ENCODE measurements at regions of chr6 and their contacts with region 1.

Region 1: GRCh38 chr6:149028767-149029405 is 282.1 kb downstream of the UST start:
- DNase-seq: peak; percentile 67
- H3K4me3 Mint-ChIP-seq: peak overlapping the region; percentile 77
- H3K27ac Mint-ChIP-seq: peak overlapping the region; percentile 87
- H3K4me1 Mint-ChIP-seq: peaks cover 57% of the 10 kb centered on the region
- H3K27me3 Mint-ChIP-seq: no peaks in the 10 kb centered on the region

Region 2: GRCh38 chr6:148760568-148761526 is 268.0 kb before region 1 on chr6:
- intact Hi-C with region 1: loop called (anchors 2 kb)
- DNase-seq: no peak
- H3K4me3 Mint-ChIP-seq: peak overlapping the region; percentile 11
- H3K27ac Mint-ChIP-seq: peak overlapping the region; percentile 54
- H3K4me1 Mint-ChIP-seq: peaks cover 30% of the 10 kb centered on the region
- H3K27me3 Mint-ChIP-seq: peaks cover 57% of the 10 kb centered on the region

Region 3: DNA sequence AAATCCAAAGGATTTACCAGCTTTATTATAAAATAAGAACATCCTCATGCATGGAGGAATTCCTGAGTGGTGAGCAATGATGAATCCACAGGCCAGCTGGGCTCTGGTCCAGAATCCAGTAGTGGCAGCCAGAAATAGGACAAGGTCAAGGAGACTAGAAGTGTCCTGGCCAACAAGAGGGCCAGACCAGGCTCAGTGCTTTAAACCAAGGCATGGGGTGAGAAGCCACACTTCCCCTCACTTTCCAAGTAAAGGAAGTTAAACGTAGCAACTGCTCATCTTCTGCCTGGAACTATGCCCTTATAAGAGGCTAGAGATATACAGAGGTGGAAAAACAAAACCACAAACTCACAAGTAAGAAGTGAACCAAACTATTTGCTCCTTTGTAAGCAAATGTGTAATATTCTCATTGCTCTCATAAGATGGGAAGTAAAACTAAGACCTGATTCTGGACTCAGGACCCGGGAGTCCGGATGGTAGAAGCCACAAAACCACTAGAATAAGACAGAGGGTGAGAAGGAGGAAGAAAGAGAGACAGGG is 28.9 kb before region 1 on chr6:
- intact Hi-C with region 1: no loop called
- DNase-seq: no peak
- H3K4me3 Mint-ChIP-seq: peak overlapping the region; percentile 47
- H3K27ac Mint-ChIP-seq: peak overlapping the region; percentile 33
- H3K4me1 Mint-ChIP-seq: peaks cover 33% of the 10 kb centered on the region
- H3K27me3 Mint-ChIP-seq: peaks cover 17% of the 10 kb centered on the region

Region 4: DNA sequence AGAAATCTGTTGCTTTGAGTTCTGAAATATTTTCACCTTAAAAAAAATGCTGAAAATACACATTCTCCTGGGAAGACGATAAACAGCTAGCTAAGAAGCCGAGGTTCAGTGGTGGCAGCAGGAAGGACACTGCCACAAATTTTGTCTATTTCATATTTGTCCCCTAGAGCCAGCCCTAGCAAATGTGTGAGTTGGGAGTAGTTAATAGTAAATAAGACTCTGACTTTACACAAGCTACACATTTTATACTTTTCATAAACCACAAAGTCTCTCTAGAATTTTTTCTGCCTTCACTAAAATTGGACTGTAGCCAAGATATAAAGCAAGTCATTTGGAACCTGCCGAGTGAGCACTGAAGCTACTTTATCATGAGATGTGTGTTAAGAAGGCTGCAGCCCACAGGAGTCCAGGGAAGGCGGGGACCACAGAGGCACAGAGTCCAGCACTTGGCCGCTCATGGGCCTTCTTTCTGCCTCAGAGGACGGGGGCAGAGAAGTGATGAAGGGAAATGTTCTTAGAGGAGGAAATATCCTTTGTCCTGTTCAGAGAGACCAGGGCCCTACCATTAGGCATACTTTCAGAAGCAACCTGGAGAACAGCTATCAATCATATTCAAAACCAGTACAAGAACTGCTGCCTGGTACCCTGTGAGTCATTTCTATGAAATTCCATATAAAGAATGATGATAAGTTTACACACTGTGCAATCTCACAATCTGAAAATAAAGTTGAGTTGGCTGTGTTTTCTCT is 46.9 kb after region 1 on chr6:
- intact Hi-C with region 1: loop called (anchors 1 kb)
- DNase-seq: no peak
- H3K4me3 Mint-ChIP-seq: no peak overlapping the region
- H3K27ac Mint-ChIP-seq: peak overlapping the region; percentile 62
- H3K4me1 Mint-ChIP-seq: peaks cover 61% of the 10 kb centered on the region
- H3K27me3 Mint-ChIP-seq: no peaks in the 10 kb centered on the region

Region 5: DNA sequence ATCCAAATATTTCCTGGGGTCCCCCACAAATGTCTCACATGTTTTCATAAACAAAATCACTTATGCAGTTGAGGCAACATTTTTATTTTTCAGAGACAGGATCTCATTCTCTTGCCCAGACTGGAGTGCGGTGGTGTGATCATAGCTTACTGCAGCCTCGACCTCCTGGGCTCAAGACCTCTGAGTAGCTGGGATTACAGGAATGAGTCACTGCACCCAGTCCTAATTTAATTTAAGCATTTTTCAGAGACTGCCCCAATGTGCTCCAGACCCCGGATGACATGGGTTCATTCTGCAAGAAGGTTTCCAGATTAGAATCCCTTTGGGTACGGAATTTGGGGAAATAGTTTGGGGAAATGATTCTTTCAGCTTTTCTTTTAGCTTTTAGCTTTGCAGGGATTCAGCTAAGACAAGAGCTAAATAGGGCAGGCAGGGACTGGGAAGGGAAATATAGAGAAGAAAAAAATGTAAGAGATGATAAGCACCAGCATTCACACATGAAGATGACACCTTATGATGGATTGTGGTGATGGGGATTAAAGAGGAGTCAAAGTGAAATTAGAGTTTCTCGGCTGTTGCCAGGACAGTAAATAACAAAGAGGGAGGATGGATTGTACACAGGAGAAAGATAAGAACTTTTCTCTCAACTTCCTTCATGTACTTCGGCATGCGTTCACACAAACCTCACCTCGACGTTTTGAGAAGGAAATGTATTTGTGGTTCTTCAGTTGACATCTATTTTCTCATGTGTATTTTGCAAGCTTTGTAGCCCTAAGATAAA is 119.2 kb after region 1 on chr6:
- intact Hi-C with region 1: loop called (anchors 1 kb)
- DNase-seq: peak; percentile 49
- H3K4me3 Mint-ChIP-seq: peak overlapping the region; percentile 34
- H3K27ac Mint-ChIP-seq: peak overlapping the region; percentile 96
- H3K4me1 Mint-ChIP-seq: peaks cover 89% of the 10 kb centered on the region
- H3K27me3 Mint-ChIP-seq: no peaks in the 10 kb centered on the region

Region 6: DNA sequence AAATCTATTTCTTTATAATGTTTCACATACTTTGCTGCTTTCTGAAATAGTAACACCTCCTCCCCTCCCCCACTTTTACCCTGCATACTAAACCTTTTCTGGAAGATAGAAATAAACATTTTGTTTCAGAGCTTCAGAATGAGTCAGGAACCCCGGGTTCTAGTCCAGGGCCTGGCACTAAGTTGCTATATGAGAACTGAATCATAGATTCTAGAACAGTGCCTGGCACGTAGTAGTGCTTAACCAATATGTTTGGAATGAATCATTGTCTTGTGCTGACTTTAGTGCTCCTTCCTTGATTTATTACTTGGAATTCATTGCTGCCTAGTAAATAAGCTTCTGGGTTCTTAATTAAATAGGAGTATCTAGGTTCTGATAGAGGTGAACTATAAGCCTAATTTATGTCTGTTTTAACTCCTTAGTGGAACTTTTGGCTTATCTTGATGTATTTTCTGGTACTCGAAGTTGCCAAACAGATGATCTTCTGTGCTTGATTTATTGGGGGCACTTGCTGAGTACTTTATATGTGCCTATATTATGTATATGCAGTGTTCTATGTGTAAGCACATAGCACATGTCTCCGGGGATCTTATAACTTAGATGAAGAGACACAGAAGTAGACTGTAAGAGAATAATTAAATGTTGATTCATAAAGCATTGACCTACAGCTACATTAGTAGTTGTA is 307.2 kb after region 1 on chr6:
- intact Hi-C with region 1: loop called (anchors 1 kb)
- DNase-seq: peak; percentile 22
- H3K4me3 Mint-ChIP-seq: peak overlapping the region; percentile 76
- H3K27ac Mint-ChIP-seq: peak overlapping the region; percentile 93
- H3K4me1 Mint-ChIP-seq: peaks cover 94% of the 10 kb centered on the region
- H3K27me3 Mint-ChIP-seq: no peaks in the 10 kb centered on the region

Region 7: DNA sequence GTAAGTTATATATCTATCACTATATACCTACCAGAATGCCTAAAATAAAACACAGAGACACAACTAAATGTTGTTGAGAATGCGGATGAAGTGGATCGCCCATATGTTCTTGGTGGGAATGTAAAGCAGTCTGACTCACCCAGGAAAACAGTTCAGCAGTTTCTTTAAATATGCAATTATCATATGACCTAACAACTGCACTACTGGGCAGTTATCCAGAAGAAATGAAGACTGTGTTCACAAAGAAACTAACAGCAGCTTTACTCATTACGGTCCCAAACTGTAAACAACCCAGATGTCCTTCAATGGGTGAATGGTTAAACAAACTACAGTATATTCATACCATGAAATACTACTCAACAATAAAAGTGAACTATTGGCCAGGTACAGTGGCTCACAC is 470.2 kb after region 1 on chr6:
- intact Hi-C with region 1: loop called (anchors 1 kb)
- DNase-seq: no peak
- H3K4me3 Mint-ChIP-seq: no peak overlapping the region
- H3K27ac Mint-ChIP-seq: peak overlapping the region; percentile 83
- H3K4me1 Mint-ChIP-seq: peaks cover 78% of the 10 kb centered on the region
- H3K27me3 Mint-ChIP-seq: no peaks in the 10 kb centered on the region

Region 8: DNA sequence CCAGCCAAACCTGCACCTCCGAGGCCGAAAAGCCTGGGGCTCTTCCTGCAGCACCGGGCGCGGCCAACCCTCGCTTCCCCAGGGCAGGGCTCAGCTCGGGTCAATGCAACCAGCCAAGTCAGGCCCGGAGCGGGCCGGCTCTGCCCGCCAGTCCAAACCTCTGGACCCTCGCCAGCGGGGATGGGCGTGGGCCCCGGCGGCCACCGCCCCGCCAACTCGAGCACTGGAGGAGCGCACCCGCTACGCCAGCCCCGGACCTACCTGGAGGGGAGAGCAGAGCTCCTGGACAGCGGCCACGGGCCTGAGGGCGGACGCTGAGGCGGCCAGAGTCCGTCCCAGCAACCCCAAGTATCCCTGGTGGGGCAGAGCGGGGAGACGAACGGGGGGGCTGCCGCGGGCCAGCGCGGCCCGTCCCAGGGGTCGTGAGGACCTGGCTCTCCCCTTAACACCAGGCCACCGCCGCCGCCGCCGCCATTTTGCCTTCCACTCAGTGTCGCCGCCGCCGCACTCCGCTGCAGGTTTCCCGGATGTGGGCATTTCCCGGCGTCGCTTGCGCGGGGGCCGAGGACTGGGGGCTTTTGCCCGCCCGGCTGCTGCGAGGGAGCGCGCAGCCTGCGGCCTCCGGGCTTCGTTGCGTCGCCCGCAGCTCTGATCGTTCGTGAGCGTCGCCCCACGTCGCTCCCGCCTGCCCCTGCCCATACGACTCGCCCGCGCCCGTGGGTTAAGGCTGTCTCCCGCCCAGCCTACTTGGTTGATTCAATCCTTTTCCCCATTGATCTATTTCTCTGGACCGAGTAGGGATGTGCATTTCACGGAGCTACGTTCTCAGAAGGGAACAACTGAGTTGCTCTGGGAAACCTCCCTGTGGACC is 688.9 kb after region 1 on chr6 and contains the start of gene LATS1:
- intact Hi-C with region 1: loop called (anchors 5 kb)
- DNase-seq: peak; percentile 90
- H3K4me3 Mint-ChIP-seq: peak within 1 kb of the TSS; percentile 93
- H3K27ac Mint-ChIP-seq: peak within 1 kb of the TSS; percentile 91
- H3K4me1 Mint-ChIP-seq: peaks cover 31% of the 10 kb centered on the region
- H3K27me3 Mint-ChIP-seq: no peaks in the 10 kb centered on the region
- total RNA-seq, gene LATS1: 33.1 and 34.0 TPM in 2 replicates